GM10248 (cell line): ENCODE measurements at regions of chr10 and their contacts with region 1.

Region 1: GRCh38 chr10:109883859-109884771 is 39.2 kb downstream of the XPNPEP1 start:
- DNase-seq: peak; percentile 79
- CTCF ChIP-seq: peak; percentile 85

Region 2: GRCh38 chr10:109852475-109853037 is 31.6 kb before region 1 on chr10:
- CTCF ChIA-PET with region 1: interaction called, 16 read pairs
- POLR2A ChIA-PET with region 1: no interaction called
- DNase-seq: peak; percentile 75
- CTCF ChIP-seq: peak; percentile 96

Region 3: GRCh38 chr10:109894516-109894915 is 10.4 kb after region 1 on chr10:
- CTCF ChIA-PET with region 1: interaction called, 60 read pairs
- POLR2A ChIA-PET with region 1: interaction called, 3 read pairs
- DNase-seq: no peak
- CTCF ChIP-seq: no peak

Region 4: GRCh38 chr10:109902934-109903589 is 18.9 kb after region 1 on chr10:
- CTCF ChIA-PET with region 1: interaction called, 60 read pairs
- POLR2A ChIA-PET with region 1: no interaction called
- DNase-seq: no peak
- CTCF ChIP-seq: no peak

Region 5: DNA sequence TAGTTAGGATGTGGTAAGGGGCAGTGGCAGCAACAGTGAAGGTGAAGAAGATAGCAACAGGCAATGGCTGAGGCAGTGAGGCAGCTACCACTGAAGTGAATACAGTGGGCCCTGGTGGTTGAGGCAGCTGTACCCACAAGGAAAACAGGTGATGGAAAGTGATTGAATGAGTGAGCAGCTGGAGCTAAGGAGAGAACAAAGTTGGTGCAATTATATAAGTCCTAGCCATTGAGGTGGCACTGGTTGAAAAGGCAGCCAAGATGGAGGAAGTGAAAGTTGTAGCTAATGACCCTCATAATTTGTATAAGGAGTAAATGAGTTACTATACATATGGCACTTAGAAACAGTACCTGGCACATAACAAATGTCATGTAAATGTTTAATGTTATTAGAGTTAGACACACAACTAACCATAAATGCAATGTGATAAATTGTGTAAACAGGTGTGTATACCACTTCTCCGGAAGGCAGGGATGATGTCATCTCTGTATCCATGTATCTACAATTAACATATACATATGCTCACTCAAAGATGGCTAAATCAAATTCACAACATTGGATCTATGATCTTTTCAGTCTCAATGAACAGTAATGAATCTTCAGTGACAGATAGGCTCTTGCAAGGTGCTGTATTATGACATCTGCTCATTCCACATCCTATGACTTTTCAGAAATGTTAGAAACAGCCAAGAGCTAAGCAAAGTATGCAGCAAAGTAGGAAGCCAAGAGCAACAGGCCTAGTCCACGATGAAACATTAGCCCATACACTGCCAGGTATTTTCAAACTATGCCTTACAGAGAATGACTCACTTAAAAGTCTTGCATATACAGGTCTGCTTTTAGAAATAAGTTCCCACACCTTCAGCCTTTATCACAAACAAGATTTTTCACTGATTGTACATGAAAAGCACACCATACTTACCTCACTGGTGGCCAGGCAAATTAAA is 28.5 kb after region 1 on chr10:
- CTCF ChIA-PET with region 1: interaction called, 21 read pairs
- POLR2A ChIA-PET with region 1: no interaction called
- DNase-seq: peak; percentile 40
- CTCF ChIP-seq: no peak

Region 6: GRCh38 chr10:109939315-109939961 is 55.3 kb after region 1 on chr10:
- CTCF ChIA-PET with region 1: interaction called, 10 read pairs
- POLR2A ChIA-PET with region 1: no interaction called
- DNase-seq: no peak
- CTCF ChIP-seq: no peak

Region 7: DNA sequence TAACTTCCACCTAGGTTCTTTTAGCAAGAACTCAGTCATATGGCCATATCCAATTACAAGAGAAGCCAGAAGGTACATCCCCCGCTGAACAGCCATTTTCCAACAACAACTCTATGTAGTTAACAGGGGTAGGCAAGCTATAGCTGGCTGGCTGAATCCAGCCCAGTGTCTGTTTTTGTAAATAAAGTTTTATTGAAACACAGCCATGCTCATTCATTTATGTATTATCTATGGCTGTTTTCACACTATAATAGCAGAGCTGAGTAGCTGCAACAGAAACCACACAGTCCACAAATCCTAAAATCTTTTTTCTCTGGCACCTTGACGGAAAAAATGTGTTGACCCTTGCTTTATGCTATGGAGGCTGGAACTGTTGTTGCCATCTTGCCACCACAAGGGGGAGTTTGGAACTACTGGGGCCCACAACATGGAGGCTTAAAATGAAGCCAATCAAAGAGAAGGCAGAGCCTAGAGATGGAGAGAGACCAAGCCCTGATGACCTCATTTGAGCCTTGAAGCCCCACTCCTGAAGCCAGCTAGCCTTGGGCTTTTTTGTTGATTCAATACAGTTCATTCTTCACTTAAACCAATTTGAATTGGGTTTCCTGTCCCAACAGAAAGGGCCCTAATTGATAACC is 72.5 kb after region 1 on chr10:
- CTCF ChIA-PET with region 1: interaction called, 11 read pairs
- POLR2A ChIA-PET with region 1: no interaction called
- DNase-seq: peak; percentile 62
- CTCF ChIP-seq: peak; percentile 67